Left colon (tissue), 2 donors: ENCODE measurements at regions of chr3 and their contacts with region 1.

Region 1: GRCh38 chr3:98022978-98023820 is 11.9 kb downstream of the GABRR3 start:
- DNase-seq: peak; percentile 64 to 95
- ATAC-seq: peak; percentile 70

Region 2: DNA sequence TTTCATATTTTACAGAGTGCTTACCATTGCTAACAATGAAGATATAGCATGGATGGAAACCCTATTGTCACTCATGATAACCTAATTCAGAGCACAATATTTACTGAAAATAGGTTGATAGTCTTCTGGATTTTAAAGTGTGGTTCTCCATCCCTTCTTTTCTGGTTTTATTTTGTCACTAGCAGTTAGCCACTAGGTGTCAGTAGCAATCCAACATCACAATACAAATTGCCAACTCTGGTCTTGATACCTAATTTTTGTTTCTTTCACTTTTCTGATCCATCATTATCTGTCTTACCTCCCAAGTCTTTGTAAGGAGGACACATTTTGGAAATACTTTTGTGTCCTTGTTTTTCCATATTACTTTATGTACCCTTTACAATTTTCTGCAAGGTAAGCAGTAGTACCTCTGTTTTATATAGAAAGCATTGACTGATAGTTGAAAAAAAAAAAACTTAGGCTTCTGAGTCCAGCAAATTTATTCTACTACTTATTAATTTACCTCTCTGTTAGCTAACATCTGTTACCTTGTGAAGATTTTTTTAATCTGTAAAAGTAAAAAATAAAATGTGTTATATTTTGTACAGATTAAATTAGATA is 229.7 kb before region 1 on chr3:
- intact Hi-C with region 1: loop called (anchors 2 to 10 kb)
- DNase-seq: no peak
- ATAC-seq: peak; percentile 48

Region 3: GRCh38 chr3:98095870-98096269 is 72.7 kb after region 1 on chr3:
- intact Hi-C with region 1: no loop called
- DNase-seq: no peak
- ATAC-seq: no peak

Region 4: DNA sequence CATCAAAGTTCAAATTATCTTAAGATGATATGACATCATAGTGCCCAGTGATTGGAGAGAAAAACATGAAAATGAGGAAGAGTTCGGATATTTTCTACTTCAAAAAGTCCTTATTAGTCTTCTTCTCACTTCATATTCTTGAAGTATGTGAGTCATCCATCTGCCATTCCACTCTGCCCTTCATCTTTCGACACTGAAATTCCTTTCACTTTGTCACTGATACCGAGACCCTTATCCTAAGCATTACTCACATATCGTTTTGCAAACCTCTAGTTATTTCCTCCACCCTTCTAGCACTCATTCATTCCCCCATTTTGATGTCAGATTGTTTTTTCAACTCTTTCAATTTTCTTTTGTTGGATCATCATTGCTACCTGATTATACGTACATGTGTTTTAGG is 128.0 kb after region 1 on chr3:
- intact Hi-C with region 1: no loop called
- DNase-seq: no peak
- ATAC-seq: no peak